H1 (cell line): ENCODE measurements at regions of chr16 and their contacts with region 1.

Region 1: GRCh38 chr16:81204798-81205680 is 33.5 kb upstream of the BCO1 start:
- DNase-seq: peak in 1 of 2 experiments; percentile 55
- H3K4me3 ChIP-seq: no peak overlapping the region
- H3K27ac ChIP-seq: no peak overlapping the region
- H3K4me1 ChIP-seq: no peaks in the 10 kb centered on the region
- H3K27me3 ChIP-seq: no peaks in the 10 kb centered on the region
- CTCF ChIP-seq: peak; percentile 36 to 71 (median 68)
- EP300 ChIP-seq: no peak
- POLR2A ChIP-seq: no peak
- RAD21 ChIP-seq: peak; percentile 55 to 69

Region 2: DNA sequence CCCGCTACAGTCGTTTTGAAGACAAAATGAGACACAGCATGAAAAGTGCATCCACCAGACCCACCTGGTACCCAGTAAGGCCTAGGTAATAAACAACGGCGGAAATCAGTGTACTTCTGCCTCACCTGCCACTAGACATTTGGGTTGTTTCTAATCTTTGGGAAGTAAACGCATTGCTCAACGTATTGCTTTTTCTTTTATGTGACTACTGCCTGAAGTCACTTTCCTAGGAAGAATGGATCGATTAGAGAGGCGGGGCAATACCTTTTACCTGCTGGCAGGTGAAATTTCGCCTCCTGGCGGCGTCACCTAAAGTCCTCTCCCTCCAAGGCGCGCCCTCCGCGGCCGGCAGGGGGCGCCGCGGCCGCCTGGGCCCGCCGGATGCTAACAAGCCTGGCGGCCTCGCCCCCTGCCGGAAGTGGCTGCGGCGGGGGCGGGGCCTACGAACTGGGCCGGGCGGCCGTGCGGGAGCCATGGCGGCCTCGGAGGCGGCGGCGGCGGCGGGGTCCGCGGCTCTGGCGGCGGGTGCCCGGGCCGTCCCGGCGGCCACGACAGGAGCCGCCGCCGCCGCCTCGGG is 169.6 kb before region 1 on chr16 and contains the start of gene ATMIN:
- CTCF ChIA-PET with region 1: interaction called, 10 read pairs
- POLR2A ChIA-PET with region 1: no interaction called
- DNase-seq: peak; percentile 80 to 93
- H3K4me3 ChIP-seq: peak within 1 kb of the TSS; percentile 66 to 90 (median 85)
- H3K27ac ChIP-seq: peak within 1 kb of the TSS; percentile 80; the same call in 1 of the 2 replicates
- H3K4me1 ChIP-seq: peaks cover 2 to 6% (median 3%) of the 10 kb centered on the region in 4 experiments; a peak in 5 of 7 replicates
- H3K27me3 ChIP-seq: no peaks in the 10 kb centered on the region
- CTCF ChIP-seq: peak; percentile 95 to 100 (median 96)
- EP300 ChIP-seq: peak in 1 of 2 experiments; percentile 73; a peak in 1 of 3 replicates
- POLR2A ChIP-seq: peak; percentile 46 to 70; a peak in 1 of 3 replicates
- RAD21 ChIP-seq: peak; percentile 59 to 74
- total RNA-seq, gene ATMIN: 55.9 and 59.8 TPM in 2 replicates

Region 3: DNA sequence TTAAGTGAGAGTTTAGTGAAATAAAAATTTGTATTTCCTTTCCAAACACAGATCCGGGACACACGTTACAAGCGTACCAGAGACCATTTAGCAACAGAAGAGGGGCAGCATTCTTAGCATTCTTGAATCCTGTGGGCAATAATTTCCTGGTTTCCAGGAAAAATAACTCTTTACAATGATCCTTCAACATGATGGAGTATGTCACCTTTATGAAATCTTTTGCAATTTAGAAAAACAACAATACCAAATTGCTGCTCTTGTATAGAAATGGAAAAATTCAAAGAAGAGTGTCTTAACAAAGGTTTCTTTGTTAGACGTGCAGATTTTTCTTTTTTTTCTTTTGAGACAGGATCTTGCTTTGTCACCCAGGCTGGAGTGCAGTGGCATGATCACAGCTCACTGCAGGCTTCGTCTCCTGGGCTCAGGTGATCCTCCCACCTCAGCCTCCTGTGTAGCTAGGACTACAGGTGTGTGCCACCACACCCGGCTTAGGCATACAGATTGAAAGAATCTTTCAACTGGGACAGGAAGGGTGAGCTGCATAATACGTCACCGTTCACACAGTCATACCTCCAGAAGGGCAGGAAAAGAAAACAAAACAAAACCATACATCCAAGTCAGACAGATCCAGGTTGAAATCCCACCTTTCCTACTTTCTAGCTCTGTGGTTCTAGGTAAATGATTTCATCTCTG is 98.1 kb before region 1 on chr16:
- CTCF ChIA-PET with region 1: no interaction called
- POLR2A ChIA-PET with region 1: no interaction called
- DNase-seq: no peak
- H3K4me3 ChIP-seq: no peak overlapping the region
- H3K27ac ChIP-seq: no peak overlapping the region
- H3K4me1 ChIP-seq: no peaks in the 10 kb centered on the region
- H3K27me3 ChIP-seq: no peaks in the 10 kb centered on the region
- CTCF ChIP-seq: no peak
- EP300 ChIP-seq: no peak
- POLR2A ChIP-seq: no peak
- RAD21 ChIP-seq: no peak

Region 4: GRCh38 chr16:81181013-81181720 is 23.9 kb before region 1 on chr16:
- CTCF ChIA-PET with region 1: interaction called, 11 read pairs
- POLR2A ChIA-PET with region 1: no interaction called
- DNase-seq: peak; percentile 81
- H3K4me3 ChIP-seq: peak overlapping the region; percentile 7 to 49 (median 18); a peak in 5 of 8 replicates
- H3K27ac ChIP-seq: peak overlapping the region; percentile 38
- H3K4me1 ChIP-seq: peaks cover 3 to 7% (median 6%) of the 10 kb centered on the region in 4 experiments
- H3K27me3 ChIP-seq: no peaks in the 10 kb centered on the region
- CTCF ChIP-seq: no peak
- EP300 ChIP-seq: no peak
- POLR2A ChIP-seq: peak; percentile 64 to 81
- RAD21 ChIP-seq: no peak

Region 5: DNA sequence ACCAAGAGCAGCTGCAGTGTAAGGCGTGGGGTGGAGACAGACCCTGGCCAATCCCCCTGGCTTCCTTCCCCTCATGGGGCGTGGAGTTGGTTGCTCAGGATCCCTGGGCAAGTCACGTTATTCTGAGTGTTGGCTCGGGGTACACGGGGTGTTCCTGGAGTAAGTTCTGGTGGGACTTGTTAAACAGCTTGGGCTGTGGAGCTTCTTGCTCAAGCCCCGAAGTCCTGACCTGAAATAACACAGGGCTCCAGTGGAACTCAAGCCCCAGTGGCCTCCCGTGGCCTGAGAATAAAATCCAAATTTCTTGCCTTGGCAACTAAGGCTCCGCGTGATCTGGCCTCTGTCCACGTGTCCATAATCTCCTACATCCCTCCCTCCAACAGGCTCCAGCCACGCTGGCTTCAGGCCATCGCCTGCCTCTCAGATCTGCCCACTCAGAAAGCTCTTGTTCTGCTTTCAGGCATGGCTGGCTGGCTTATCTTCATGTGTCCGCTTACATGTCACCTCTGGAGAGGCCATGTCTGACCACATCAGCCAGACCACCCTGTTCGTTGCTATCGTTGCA is 15.9 kb before region 1 on chr16:
- CTCF ChIA-PET with region 1: interaction called, 46 read pairs
- POLR2A ChIA-PET with region 1: no interaction called
- DNase-seq: no peak
- H3K4me3 ChIP-seq: no peak overlapping the region
- H3K27ac ChIP-seq: no peak overlapping the region
- H3K4me1 ChIP-seq: no peaks in the 10 kb centered on the region
- H3K27me3 ChIP-seq: no peaks in the 10 kb centered on the region
- CTCF ChIP-seq: no peak
- EP300 ChIP-seq: no peak
- POLR2A ChIP-seq: no peak
- RAD21 ChIP-seq: no peak

Region 6: GRCh38 chr16:81220349-81220748 is 15.3 kb after region 1 on chr16:
- CTCF ChIA-PET with region 1: interaction called, 71 read pairs
- POLR2A ChIA-PET with region 1: interaction called, 4 read pairs
- DNase-seq: no peak
- H3K4me3 ChIP-seq: no peak overlapping the region
- H3K27ac ChIP-seq: no peak overlapping the region
- H3K4me1 ChIP-seq: peaks cover 0 to 3% (median 0%) of the 10 kb centered on the region in 4 experiments; a peak in 1 of 7 replicates
- H3K27me3 ChIP-seq: no peaks in the 10 kb centered on the region
- CTCF ChIP-seq: no peak
- EP300 ChIP-seq: no peak
- POLR2A ChIP-seq: no peak
- RAD21 ChIP-seq: no peak

Region 7: GRCh38 chr16:81261049-81261648 is 56.1 kb after region 1 on chr16:
- CTCF ChIA-PET with region 1: interaction called, 10 read pairs
- POLR2A ChIA-PET with region 1: no interaction called
- DNase-seq: peak in 1 of 2 experiments; percentile 60
- H3K4me3 ChIP-seq: no peak overlapping the region
- H3K27ac ChIP-seq: no peak overlapping the region
- H3K4me1 ChIP-seq: no peaks in the 10 kb centered on the region
- H3K27me3 ChIP-seq: no peaks in the 10 kb centered on the region
- CTCF ChIP-seq: peak; percentile 23 to 78 (median 46)
- EP300 ChIP-seq: no peak
- POLR2A ChIP-seq: no peak
- RAD21 ChIP-seq: peak; percentile 33 to 54

Region 8: GRCh38 chr16:81429045-81429521 is 224.0 kb after region 1 on chr16:
- CTCF ChIA-PET with region 1: no interaction called
- POLR2A ChIA-PET with region 1: no interaction called
- DNase-seq: no peak
- H3K4me3 ChIP-seq: no peak overlapping the region
- H3K27ac ChIP-seq: no peak overlapping the region
- H3K4me1 ChIP-seq: peaks cover 0 to 9% (median under 1%) of the 10 kb centered on the region in 4 experiments; a peak in 3 of 7 replicates
- H3K27me3 ChIP-seq: no peaks in the 10 kb centered on the region
- CTCF ChIP-seq: peak; percentile 34 to 54 (median 50)
- EP300 ChIP-seq: no peak
- POLR2A ChIP-seq: no peak
- RAD21 ChIP-seq: peak; percentile 51 to 58